Gastrocnemius medialis (tissue), 4 donors: ENCODE measurements at regions of chr12 and their contacts with region 1.

Region 1: GRCh38 chr12:46450279-46450748 is 77.7 kb upstream of the SLC38A2 start:
- DNase-seq: peak; percentile 50 to 85
- ATAC-seq: peak; percentile 51 to 85
- H3K4me3 ChIP-seq: no peak overlapping the region
- H3K27ac ChIP-seq: peak overlapping the region; percentile 62 to 75 (median 71)
- H3K4me1 ChIP-seq: peaks cover 48 to 54% of the 10 kb centered on the region in 2 donors
- H3K27me3 ChIP-seq: no peaks in the 10 kb centered on the region
- CTCF ChIP-seq: no peak
- POLR2A ChIP-seq: no peak

Region 2: DNA sequence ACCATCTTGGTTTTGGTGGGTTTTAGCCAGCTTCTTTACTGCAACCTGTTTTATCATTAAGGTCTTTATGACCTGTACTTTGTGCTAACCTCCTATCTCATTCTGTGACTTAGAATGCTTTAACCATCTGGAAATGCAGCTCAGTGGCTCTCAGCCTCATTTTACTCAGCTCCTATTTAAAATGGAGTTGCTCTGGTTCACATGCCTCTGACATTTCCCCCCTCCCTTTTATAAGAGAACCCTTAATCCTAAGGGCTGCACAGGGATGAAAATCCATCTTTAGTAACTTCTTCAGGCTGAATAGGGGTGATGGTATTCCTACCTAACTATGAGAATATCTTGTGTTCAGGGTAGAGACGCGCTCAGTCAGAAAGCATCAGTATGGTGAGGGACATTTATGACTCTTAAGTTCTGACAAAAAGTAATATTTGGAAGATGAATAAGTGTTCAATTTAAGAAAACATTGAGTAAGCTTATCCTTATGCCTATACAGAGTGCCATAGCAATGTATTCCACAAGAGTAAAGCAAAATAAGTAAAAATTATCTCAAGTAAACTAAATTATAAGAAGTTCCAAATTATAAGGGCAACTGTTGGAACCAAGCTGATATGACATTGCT is 196.7 kb before region 1 on chr12:
- in situ Hi-C with region 1: no loop called
- intact Hi-C with region 1: no loop called
- DNase-seq: no peak
- ATAC-seq: no peak
- H3K4me3 ChIP-seq: no peak overlapping the region
- H3K27ac ChIP-seq: no peak overlapping the region
- H3K4me1 ChIP-seq: no peaks in the 10 kb centered on the region
- H3K27me3 ChIP-seq: no peaks in the 10 kb centered on the region
- CTCF ChIP-seq: no peak
- POLR2A ChIP-seq: no peak

Region 3: GRCh38 chr12:46342562-46343033 is 107.7 kb before region 1 on chr12:
- in situ Hi-C with region 1: no loop called
- intact Hi-C with region 1: no loop called
- DNase-seq: no peak
- ATAC-seq: peak; percentile 80 to 87
- H3K4me3 ChIP-seq: no peak overlapping the region
- H3K27ac ChIP-seq: no peak overlapping the region
- H3K4me1 ChIP-seq: peaks cover 4 to 5% of the 10 kb centered on the region in 2 donors
- H3K27me3 ChIP-seq: no peaks in the 10 kb centered on the region
- CTCF ChIP-seq: peak; percentile 56 to 79 (median 66)
- POLR2A ChIP-seq: no peak

Region 4: DNA sequence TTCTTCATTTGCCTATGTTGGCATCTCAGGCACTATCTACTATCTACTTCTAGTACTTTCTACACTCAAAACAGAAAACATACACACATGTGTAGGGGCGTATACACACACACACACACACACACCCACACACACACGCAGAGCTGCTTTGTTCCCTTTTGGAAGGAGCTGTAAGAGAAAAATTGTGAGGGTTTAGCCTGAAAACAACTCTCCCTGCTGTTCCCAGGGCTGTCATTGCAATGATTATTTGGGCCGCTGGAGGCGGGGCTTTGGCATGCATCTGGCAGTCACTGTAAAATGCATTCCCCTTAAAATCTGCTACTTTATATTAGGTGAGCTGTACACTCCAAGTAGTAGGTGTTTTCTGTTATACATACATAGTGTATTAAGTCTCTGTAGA is 48.7 kb before region 1 on chr12:
- in situ Hi-C with region 1: no loop called
- intact Hi-C with region 1: loop called (anchors 2 kb)
- DNase-seq: no peak
- ATAC-seq: no peak
- H3K4me3 ChIP-seq: no peak overlapping the region
- H3K27ac ChIP-seq: peak overlapping the region in 2 of 4 donors; percentile 33 to 56
- H3K4me1 ChIP-seq: peaks cover 33 to 40% of the 10 kb centered on the region in 2 donors
- H3K27me3 ChIP-seq: no peaks in the 10 kb centered on the region
- CTCF ChIP-seq: peak in 2 of 5 experiments; percentile 26 to 31
- POLR2A ChIP-seq: no peak